AG04450 (cell line): ENCODE measurements at regions of chr1 and their contacts with region 1.

Region 1: DNA sequence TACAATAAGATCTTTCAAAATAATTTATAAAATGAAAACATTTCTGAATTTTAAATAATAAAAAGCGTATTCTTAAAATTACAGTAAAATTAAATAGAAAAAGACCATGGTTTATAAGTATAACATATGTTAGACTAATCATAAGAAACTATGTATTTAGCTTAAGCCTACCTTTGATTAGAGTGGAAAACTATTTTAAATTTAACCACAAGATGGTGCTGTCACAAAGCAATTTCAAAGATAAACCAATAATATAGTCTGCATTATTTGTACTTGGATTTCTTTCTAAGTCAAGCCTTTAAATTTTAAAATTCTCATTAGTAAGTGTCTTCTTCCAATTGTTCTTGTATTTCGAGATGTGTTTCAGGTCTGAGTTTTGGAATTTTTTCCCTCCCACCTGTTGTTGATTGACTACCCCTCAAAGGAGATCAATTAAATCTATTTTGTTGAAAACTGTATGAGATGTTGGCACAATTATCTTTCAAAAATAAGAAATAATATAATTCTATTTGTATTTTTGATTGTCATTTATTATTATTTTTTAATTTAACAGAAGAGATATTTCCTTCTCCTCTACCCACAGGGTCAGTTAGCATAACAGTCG is 459.8 kb downstream of the KCNT2 start:
- DNase-seq: peak; percentile 15
- H3K4me3 ChIP-seq: no peak overlapping the region
- H3K27ac ChIP-seq: no peak overlapping the region
- H3K27me3 ChIP-seq: no peaks in the 10 kb centered on the region
- CTCF ChIP-seq: peak; percentile 50

Region 2: GRCh38 chr1:195939844-195940243 is 208.6 kb before region 1 on chr1:
- CTCF ChIA-PET with region 1: no interaction called
- POLR2A ChIA-PET with region 1: no interaction called
- DNase-seq: no peak
- H3K4me3 ChIP-seq: no peak overlapping the region
- H3K27ac ChIP-seq: no peak overlapping the region
- H3K27me3 ChIP-seq: no peaks in the 10 kb centered on the region
- CTCF ChIP-seq: peak; percentile 8; the same call in 1 of the 2 replicates

Region 3: DNA sequence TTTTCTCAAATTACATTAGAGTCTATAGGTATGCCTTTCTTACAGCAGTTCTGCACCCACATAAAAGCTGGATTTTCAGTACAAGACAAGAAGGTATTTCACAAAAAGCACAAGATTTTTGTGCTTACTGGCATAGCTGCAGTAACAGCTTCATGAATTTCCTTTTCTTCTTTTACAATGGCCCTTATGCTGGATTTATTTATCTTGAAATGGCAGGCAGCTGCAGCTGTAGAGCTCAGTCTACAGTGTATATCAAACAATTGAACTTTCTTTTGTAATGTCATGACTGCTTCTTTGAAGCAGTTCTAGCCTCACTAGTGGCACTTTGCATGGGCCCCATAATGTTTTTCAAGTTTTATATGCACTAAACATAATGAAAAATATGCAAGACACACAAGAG is 50.5 kb before region 1 on chr1:
- CTCF ChIA-PET with region 1: no interaction called
- POLR2A ChIA-PET with region 1: no interaction called
- DNase-seq: no peak
- H3K4me3 ChIP-seq: no peak overlapping the region
- H3K27ac ChIP-seq: no peak overlapping the region
- H3K27me3 ChIP-seq: no peaks in the 10 kb centered on the region
- CTCF ChIP-seq: no peak

Region 4: DNA sequence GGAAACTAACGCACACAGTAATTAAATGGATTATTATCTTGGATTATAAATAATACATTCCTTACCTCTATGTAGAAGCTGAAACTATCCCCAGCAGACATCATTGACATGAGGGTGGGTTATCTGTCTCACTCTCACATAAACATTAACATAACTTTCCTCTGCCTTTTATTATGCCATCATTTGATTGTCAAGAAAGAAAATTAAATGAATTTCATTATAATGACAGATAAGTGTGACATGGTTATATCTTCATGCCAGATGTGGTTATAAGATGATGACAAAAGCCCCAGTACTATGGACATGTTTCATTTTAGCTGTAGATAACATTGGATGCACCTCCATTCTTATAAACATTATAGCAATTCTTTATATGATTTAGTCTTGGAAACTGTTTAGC is 16.8 kb before region 1 on chr1:
- CTCF ChIA-PET with region 1: interaction called, 15 read pairs
- POLR2A ChIA-PET with region 1: no interaction called
- DNase-seq: no peak
- H3K4me3 ChIP-seq: no peak overlapping the region
- H3K27ac ChIP-seq: no peak overlapping the region
- H3K27me3 ChIP-seq: no peaks in the 10 kb centered on the region
- CTCF ChIP-seq: no peak

Region 5: DNA sequence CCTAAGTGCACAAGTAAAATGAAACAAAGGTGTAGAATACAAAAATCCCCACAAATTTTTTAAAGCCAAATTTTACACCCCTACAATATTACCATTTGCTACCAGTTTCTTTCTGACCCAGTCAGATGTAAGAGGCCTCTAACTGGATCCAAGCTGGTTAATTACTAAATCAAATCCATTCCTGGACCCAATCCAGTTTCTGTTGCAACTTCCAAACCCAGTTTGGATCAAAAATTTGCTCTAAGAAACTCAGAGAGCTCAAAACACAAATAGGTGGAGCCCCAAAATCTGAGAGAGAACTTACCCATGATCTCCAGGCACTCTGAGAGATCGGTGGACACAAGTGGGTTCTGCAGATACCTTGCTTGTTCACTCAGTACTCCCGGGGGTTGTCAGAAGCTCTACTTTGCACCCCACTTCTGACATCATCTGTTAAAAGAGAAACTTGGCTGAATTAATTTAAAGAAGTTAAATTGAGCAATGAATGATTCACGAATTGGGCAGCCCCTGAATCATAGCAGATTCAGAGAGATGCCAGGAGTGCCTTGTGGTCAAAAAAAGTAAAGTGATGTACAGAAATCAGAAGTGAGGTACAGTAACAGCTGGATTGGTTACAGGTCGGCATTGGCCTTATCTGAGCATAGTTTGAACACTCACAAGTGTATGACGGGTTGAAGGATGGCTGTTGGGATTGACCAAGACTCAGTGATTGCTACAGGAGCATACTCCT is 11.8 kb after region 1 on chr1:
- CTCF ChIA-PET with region 1: interaction called, 10 read pairs
- POLR2A ChIA-PET with region 1: no interaction called
- DNase-seq: no peak
- H3K4me3 ChIP-seq: no peak overlapping the region
- H3K27ac ChIP-seq: no peak overlapping the region
- H3K27me3 ChIP-seq: no peaks in the 10 kb centered on the region
- CTCF ChIP-seq: no peak

Region 6: DNA sequence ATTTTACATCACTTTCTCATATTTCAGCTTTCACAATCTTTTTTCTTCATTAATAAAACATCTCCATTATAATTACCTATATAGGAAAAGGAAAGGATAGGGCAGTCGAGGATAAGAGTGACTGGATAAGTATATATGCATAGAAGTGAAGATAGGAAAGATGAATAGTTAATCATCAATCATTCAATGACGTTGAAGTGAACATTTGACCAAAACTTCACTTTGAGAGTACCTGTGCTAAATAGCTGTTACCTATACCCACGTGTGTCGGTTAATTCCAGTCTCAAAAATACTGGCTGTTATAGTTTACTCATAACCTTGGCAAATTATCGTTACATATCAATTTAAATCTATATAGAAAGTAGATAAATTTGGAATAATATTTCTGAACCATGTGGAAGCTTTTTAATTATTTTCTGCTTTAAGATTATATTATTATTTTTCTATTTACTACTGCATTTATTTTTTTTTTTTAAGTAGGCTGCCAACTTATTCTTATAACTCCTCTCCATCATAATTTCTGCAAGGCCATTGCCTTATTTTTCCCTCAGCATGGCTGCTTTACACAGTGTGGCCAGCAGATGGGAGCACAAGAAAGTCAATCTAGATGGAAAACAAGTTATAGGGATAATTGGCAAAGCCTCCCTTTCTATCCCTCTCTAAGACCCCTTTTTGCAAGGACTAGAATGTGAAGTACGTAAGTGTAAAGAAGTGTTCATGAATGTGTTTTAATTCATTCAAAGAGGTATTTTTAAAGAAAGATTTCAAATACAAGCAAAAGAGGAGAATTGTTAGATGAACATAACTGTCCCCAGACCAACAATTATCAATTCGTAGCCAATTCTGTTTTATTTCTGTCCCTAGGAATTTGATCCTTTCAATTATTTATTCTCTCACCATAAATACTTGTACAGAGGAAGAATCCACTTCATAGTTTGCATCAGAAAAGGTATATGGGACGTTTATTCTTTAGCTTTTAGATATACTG is 169.4 kb after region 1 on chr1:
- CTCF ChIA-PET with region 1: interaction called, 252 read pairs
- POLR2A ChIA-PET with region 1: no interaction called
- DNase-seq: peak; percentile 15
- H3K4me3 ChIP-seq: no peak overlapping the region
- H3K27ac ChIP-seq: no peak overlapping the region
- H3K27me3 ChIP-seq: no peaks in the 10 kb centered on the region
- CTCF ChIP-seq: peak; percentile 77

Region 7: DNA sequence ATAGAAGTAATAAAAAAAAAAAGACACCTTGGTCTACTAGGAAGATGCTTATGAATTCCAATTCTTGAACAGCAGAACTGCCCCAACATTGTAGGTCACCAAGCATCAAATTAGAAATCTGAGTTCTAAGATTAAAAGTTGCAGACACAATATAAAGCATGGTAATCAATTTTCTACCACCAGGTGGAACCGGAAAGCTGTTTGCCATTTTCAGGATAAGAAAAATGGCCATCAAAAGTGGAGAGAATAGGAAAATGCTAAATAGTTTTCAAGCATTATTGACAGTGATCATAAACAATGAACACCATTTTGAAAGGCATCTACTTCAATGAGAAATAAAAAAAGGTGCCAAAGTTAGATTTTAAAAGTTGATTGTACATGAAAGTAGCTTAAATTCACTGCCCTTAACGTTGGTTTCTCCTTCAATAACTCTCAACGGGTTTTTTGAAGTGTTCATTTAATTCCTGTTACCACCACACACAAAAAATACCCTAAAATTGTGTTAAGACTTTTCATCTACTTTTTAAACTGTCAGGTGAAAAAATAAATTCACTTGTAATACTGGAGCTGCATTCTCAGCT is 206.8 kb after region 1 on chr1:
- CTCF ChIA-PET with region 1: interaction called, 10 read pairs
- POLR2A ChIA-PET with region 1: no interaction called
- DNase-seq: no peak
- H3K4me3 ChIP-seq: no peak overlapping the region
- H3K27ac ChIP-seq: no peak overlapping the region
- H3K27me3 ChIP-seq: no peaks in the 10 kb centered on the region
- CTCF ChIP-seq: peak; percentile 67

Region 8: GRCh38 chr1:196660852-196661251 is 512.4 kb after region 1 on chr1:
- CTCF ChIA-PET with region 1: interaction called, 51 read pairs
- POLR2A ChIA-PET with region 1: no interaction called
- DNase-seq: peak; percentile 6
- H3K4me3 ChIP-seq: no peak overlapping the region
- H3K27ac ChIP-seq: no peak overlapping the region
- H3K27me3 ChIP-seq: no peaks in the 10 kb centered on the region
- CTCF ChIP-seq: peak; percentile 53